RWPE1 (cell line): ENCODE measurements at regions of chr3 and their contacts with region 1.

Region 1: DNA sequence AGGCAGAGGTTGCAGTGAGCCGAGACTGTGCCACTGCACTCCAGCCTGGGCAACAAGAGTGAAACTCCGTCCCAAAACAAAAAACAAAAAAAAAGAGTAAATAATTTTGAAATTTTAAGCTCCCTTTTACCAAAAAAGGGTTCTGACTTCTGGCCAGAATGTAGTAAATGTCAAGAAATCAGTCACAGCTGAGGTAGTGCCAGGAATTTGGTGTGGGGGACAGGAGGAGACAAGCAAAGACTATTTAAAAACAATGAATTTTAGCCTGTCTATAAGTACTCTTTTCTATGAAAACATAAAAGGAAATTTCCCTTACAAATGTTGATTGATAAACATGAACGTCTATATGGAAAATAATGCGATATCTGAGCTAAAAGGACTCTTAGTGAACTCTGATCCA is 363.7 kb downstream of the FHIT start:
- DNase-seq: no peak
- H3K27ac ChIP-seq: no peak overlapping the region
- CTCF ChIP-seq: no peak

Region 2: GRCh38 chr3:60854791-60855190 is 32.8 kb before region 1 on chr3:
- CTCF ChIA-PET with region 1: interaction called, 10 read pairs
- POLR2A ChIA-PET with region 1: no interaction called
- DNase-seq: no peak
- H3K27ac ChIP-seq: no peak overlapping the region
- CTCF ChIP-seq: no peak